ENCODE measurements at regions of chr11 and their contacts with region 1.

Region 1: GRCh38 chr11:1309498-1310317 is at the start of gene TOLLIP:
- DNase-seq: peak; percentile 95 to 98
- H3K4me3 ChIP-seq: peak within 1 kb of the TSS; percentile 83
- H3K4me3 Mint-ChIP-seq: peak within 1 kb of the TSS; percentile 83
- H3K27ac Mint-ChIP-seq: peak within 1 kb of the TSS; percentile 69
- H3K4me1 ChIP-seq: peaks cover 27% of the 10 kb centered on the region
- H3K4me1 Mint-ChIP-seq: peaks cover 13% of the 10 kb centered on the region
- H3K27me3 ChIP-seq: no peaks in the 10 kb centered on the region
- H3K27me3 Mint-ChIP-seq: no peaks in the 10 kb centered on the region
- CTCF ChIP-seq: peak in 1 of 2 experiments; percentile 15
- total RNA-seq, gene TOLLIP: 64.6 and 78.3 TPM in 2 replicates

Region 2: GRCh38 chr11:1262172-1263006 is 47.3 kb before region 1 on chr11:
- CTCF ChIA-PET with region 1: no interaction called
- POLR2A ChIA-PET with region 1: no interaction called
- intact Hi-C with region 1: loop called (anchors 5 kb)
- DNase-seq: peak; percentile 93 to 95
- H3K4me3 ChIP-seq: peak overlapping the region; percentile 43
- H3K4me3 Mint-ChIP-seq: peak overlapping the region; percentile 72
- H3K27ac Mint-ChIP-seq: peak overlapping the region; percentile 74
- H3K4me1 ChIP-seq: peaks cover 5% of the 10 kb centered on the region
- H3K4me1 Mint-ChIP-seq: peaks cover 6% of the 10 kb centered on the region
- H3K27me3 ChIP-seq: no peaks in the 10 kb centered on the region
- H3K27me3 Mint-ChIP-seq: no peaks in the 10 kb centered on the region
- CTCF ChIP-seq: no peak

Region 3: GRCh38 chr11:1326435-1327063 is 16.8 kb after region 1 on chr11:
- CTCF ChIA-PET with region 1: no interaction called
- POLR2A ChIA-PET with region 1: no interaction called
- intact Hi-C with region 1: no loop called
- DNase-seq: no peak
- H3K4me3 ChIP-seq: no peak overlapping the region
- H3K4me3 Mint-ChIP-seq: no peak overlapping the region
- H3K27ac Mint-ChIP-seq: no peak overlapping the region
- H3K4me1 ChIP-seq: no peaks in the 10 kb centered on the region
- H3K4me1 Mint-ChIP-seq: no peaks in the 10 kb centered on the region
- H3K27me3 ChIP-seq: no peaks in the 10 kb centered on the region
- H3K27me3 Mint-ChIP-seq: peaks cover 14% of the 10 kb centered on the region
- CTCF ChIP-seq: no peak

Region 4: GRCh38 chr11:1389103-1389931 is 79.6 kb after region 1 on chr11:
- CTCF ChIA-PET with region 1: interaction called, 9 read pairs
- POLR2A ChIA-PET with region 1: interaction called, 5 read pairs
- intact Hi-C with region 1: loop called (anchors 2 kb)
- DNase-seq: peak; percentile 98 to 99
- H3K4me3 ChIP-seq: peak overlapping the region; percentile 86
- H3K4me3 Mint-ChIP-seq: peak overlapping the region; percentile 71
- H3K27ac Mint-ChIP-seq: no peak overlapping the region
- H3K4me1 ChIP-seq: peaks cover 7% of the 10 kb centered on the region
- H3K4me1 Mint-ChIP-seq: peaks cover 9% of the 10 kb centered on the region
- H3K27me3 ChIP-seq: no peaks in the 10 kb centered on the region
- H3K27me3 Mint-ChIP-seq: no peaks in the 10 kb centered on the region
- CTCF ChIP-seq: no peak